ENCODE measurements at regions of chr2 and their contacts with region 1.

Region 1: DNA sequence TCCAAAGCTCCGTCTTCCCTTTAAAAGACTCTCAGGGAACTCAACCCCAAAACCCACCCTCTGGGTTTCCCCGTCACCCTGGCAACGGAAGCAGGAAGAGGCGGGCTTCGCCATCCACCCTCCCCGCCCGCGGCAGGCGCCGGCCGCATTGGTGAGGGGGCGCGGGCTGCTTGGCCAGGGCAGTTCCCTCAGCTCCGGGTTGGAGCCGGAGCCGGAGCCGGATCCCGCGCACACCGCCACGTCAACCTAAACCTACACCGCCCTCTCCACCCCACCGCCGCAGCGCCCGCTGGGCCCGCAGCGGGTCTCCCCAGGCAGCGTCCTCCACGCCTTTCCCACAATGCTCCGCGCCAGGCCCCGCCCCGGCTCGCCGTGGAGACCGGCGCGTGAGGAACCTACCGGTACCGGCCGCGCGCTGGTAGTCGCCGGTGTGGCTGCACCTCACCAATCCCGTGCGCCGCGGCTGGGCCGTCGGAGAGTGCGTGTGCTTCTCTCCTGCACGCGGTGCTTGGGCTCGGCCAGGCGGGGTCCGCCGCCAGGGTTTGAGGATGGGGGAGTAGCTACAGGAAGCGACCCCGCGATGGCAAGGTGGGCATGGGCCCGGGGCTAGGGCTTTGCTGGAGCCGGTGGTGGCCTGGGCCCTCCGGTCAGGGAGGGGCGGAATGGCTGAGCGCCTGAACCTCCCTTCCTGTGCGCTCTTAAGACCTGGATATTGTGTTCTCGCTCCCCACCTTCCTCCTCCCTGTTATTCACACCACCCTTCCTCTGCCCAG is at the start of gene DNAJC10:
- DNase-seq: peak; percentile 85 to 96
- H3K4me3 ChIP-seq: peak within 1 kb of the TSS; percentile 63
- H3K27ac ChIP-seq: peak within 1 kb of the TSS; percentile 95
- H3K4me1 ChIP-seq: peaks cover 26% of the 10 kb centered on the region
- H3K27me3 ChIP-seq: no peaks in the 10 kb centered on the region
- CTCF ChIP-seq: 0 out of 2 replicates have a peak, but pooled peaks have one; percentile 3
- total RNA-seq, gene DNAJC10: 160 and 167 TPM in 2 replicates

Region 2: GRCh38 chr2:182115258-182115657 is 600.8 kb before region 1 on chr2:
- CTCF ChIA-PET with region 1: no interaction called
- POLR2A ChIA-PET with region 1: no interaction called
- intact Hi-C with region 1: no loop called
- DNase-seq: no peak
- H3K4me3 ChIP-seq: no peak overlapping the region
- H3K27ac ChIP-seq: no peak overlapping the region
- H3K4me1 ChIP-seq: no peaks in the 10 kb centered on the region
- H3K27me3 ChIP-seq: no peaks in the 10 kb centered on the region
- CTCF ChIP-seq: no peak

Region 3: GRCh38 chr2:182186132-182186735 is 529.8 kb before region 1 on chr2:
- CTCF ChIA-PET with region 1: no interaction called
- POLR2A ChIA-PET with region 1: interaction called, 5 read pairs
- intact Hi-C with region 1: loop called (anchors 5 kb)
- DNase-seq: peak in 1 of 2 experiments; percentile 56
- H3K4me3 ChIP-seq: no peak overlapping the region
- H3K27ac ChIP-seq: no peak overlapping the region
- H3K4me1 ChIP-seq: no peaks in the 10 kb centered on the region
- H3K27me3 ChIP-seq: no peaks in the 10 kb centered on the region
- CTCF ChIP-seq: peak; percentile 99

Region 4: GRCh38 chr2:182666674-182667314 is 49.3 kb before region 1 on chr2:
- CTCF ChIA-PET with region 1: interaction called, 4 read pairs
- POLR2A ChIA-PET with region 1: no interaction called
- intact Hi-C with region 1: loop called (anchors 1 kb)
- DNase-seq: no peak
- H3K4me3 ChIP-seq: no peak overlapping the region
- H3K27ac ChIP-seq: no peak overlapping the region
- H3K4me1 ChIP-seq: no peaks in the 10 kb centered on the region
- H3K27me3 ChIP-seq: no peaks in the 10 kb centered on the region
- CTCF ChIP-seq: peak; percentile 88

Region 5: GRCh38 chr2:182980115-182980514 is 264.0 kb after region 1 on chr2:
- CTCF ChIA-PET with region 1: no interaction called
- POLR2A ChIA-PET with region 1: no interaction called
- intact Hi-C with region 1: no loop called
- DNase-seq: peak in 1 of 2 experiments; percentile 78
- H3K4me3 ChIP-seq: no peak overlapping the region
- H3K27ac ChIP-seq: no peak overlapping the region
- H3K4me1 ChIP-seq: no peaks in the 10 kb centered on the region
- H3K27me3 ChIP-seq: no peaks in the 10 kb centered on the region
- CTCF ChIP-seq: peak; percentile 91